AG04449 (cell line): ENCODE measurements at regions of chr2 and their contacts with region 1.

Region 1: GRCh38 chr2:158745044-158745865 is 49.9 kb upstream of the DAPL1 start:
- DNase-seq: peak; percentile 23
- H3K4me3 ChIP-seq: no peak overlapping the region
- CTCF ChIP-seq: peak; percentile 52

Region 2: DNA sequence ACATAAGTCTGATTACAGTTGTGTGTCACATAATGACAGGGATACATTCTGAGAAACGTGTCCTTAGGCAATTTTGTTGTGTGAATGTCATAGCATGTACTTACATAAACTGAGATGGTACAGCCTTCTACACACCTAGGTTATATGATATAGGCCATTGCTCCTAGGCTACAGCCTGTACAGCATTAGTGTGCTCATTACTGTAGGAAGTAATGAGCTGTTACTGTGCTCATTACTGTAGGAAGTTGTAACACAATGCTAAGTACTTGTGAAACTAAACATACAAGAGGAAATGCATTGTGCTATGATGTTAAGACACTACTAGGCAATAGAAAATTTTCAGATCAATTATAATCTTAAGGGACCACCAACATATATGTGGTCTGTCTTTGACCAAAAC is 570.8 kb before region 1 on chr2:
- CTCF ChIA-PET with region 1: interaction called, 76 read pairs
- POLR2A ChIA-PET with region 1: no interaction called
- DNase-seq: no peak
- H3K4me3 ChIP-seq: no peak overlapping the region
- CTCF ChIP-seq: no peak

Region 3: DNA sequence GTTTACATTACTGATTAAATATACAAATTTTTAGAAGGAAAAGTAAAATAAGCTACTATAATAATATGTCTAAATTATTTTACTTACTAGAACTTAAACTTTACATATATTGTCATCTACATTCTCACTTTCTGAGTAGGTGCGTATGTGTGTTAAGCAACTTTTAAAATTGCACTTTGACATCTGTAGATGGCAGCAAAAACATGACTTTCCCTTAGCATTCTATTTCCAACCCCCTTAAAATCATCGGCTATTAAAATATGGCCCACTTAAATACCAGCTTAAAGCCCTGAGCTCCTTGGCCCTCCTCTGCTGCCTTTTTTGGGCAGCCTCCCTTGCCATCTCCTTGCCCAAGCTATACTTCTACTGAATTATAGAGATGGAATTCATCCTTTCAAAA is 565.6 kb before region 1 on chr2:
- CTCF ChIA-PET with region 1: interaction called, 76 read pairs
- POLR2A ChIA-PET with region 1: no interaction called
- DNase-seq: no peak
- H3K4me3 ChIP-seq: no peak overlapping the region
- CTCF ChIP-seq: peak; percentile 1

Region 4: DNA sequence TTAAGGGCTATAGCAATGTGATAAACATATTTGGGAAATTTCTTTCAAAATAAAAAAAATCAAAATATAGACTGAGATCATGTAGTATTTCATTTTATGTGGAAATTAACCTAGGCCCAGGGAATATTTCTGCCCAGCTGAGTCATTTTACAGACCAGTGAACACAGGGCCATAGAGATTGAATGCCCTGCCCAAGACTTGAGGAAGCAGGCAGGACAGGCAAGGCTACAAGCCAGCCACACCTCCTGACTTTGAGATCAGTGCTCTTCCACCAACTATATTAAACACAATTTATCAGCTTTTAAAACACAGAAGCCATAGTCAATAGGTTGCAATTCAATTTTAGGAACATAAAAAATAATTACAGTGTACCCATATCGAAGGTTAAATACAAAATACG is 301.6 kb before region 1 on chr2:
- CTCF ChIA-PET with region 1: no interaction called
- POLR2A ChIA-PET with region 1: no interaction called
- DNase-seq: no peak
- H3K4me3 ChIP-seq: no peak overlapping the region
- CTCF ChIP-seq: no peak

Region 5: GRCh38 chr2:158733430-158733755 is 11.9 kb before region 1 on chr2:
- CTCF ChIA-PET with region 1: interaction called, 10 read pairs
- POLR2A ChIA-PET with region 1: no interaction called
- DNase-seq: no peak
- H3K4me3 ChIP-seq: no peak overlapping the region
- CTCF ChIP-seq: no peak

Region 6: DNA sequence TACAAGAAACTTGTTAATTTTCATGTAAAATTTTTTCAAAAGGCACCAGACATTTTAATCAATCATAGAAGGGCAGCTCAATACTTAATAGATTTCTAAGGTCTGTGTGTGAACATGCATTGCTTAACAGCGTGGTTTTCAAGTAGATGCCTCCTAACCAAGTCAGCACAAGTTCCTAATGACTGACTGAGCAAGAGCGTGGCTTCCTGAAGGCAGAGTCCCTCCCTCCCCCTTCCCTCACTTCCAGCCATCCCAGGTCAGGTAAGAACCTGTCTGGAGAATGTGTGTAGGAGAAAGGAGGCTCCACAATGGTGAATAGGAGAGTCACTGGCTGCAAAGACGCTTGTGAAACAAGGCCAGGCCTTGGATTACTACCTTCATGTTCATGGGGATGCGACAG is 16.4 kb after region 1 on chr2:
- CTCF ChIA-PET with region 1: interaction called, 10 read pairs
- POLR2A ChIA-PET with region 1: no interaction called
- DNase-seq: no peak
- H3K4me3 ChIP-seq: no peak overlapping the region
- CTCF ChIP-seq: no peak